Mucosa of descending colon (tissue), 3 donors: ENCODE measurements at regions of chr7 and their contacts with region 1.

Region 1: DNA sequence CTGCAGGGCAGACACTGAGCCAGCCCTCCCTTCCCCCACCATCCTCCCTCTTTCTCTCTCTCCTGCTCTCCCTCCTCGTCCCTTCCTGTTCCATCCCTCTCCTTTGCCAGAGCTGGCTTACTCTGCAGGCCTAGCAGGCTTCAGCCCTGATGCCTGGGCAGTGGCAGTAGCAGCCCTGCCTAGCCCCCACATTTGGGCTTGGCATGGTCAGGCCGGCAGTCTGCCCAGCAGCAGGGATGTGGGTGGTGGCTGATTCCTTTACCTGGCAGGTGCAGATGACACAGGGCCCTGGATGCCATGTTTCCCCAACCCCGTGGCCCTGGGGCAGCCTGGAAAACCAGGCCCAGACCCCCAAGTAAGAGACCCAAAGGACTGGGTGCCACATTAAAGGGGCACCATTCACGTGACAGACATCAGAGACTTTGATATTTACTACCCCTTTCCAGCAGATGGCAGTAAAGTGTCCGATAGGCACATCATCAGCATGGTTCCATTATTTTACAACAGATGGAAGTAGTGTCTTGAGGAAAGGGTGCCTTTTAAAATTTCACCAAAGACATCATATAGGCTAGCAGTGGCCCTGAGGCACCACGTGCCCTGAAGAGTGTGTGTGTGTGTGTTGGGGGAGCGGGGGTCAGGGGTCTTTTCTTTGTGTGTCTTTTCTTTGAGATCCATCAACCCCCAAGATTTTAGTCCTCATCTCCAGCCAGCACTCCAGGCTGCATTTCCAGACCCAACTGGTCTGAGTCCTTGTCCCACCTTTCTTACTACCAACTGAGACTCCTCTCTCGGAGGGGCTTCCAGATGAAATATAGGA is 5.9 kb downstream of the KCP start:
- DNase-seq: peak in 1 of 3 donors; percentile 53
- ATAC-seq: peak; percentile 70
- H3K4me3 ChIP-seq: no peak overlapping the region
- H3K4me1 ChIP-seq: peaks cover 3% of the 10 kb centered on the region
- CTCF ChIP-seq: peak; percentile 48

Region 2: GRCh38 chr7:129091484-129092002 is 187.0 kb after region 1 on chr7:
- intact Hi-C with region 1: loop called (anchors 5 to 10 kb)
- DNase-seq: peak; percentile 80 to 95 (median 93)
- ATAC-seq: peak; percentile 99
- H3K4me3 ChIP-seq: no peak overlapping the region
- H3K4me1 ChIP-seq: peaks cover 3% of the 10 kb centered on the region
- CTCF ChIP-seq: peak; percentile 91